Sciatic nerve (tissue), 2 donors: ENCODE measurements at regions of chr7 and their contacts with region 1.

Region 1: DNA sequence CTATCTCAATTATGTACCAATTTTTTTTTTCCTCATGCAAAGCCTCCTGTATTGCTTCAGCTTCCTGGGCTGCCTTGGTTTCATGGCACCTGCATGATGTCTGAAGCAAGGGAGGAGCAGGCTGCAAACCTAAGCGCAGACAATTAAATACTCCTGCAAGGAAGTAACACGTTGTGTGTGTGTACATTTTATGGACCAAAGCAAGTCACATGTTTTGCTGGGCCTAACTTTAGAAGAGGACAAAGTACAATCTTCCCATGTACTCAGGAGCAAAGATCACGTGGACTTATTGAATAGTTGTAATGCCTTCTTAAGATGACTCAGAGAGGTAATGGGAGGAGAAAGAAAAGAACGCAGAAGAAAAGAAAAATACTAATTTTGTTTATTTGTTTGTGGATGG is 944.0 kb upstream of the C7orf33 start:
- DNase-seq: no peak
- ATAC-seq: no peak

Region 2: GRCh38 chr7:147607151-147607800 is 39.3 kb before region 1 on chr7:
- intact Hi-C with region 1: no loop called
- DNase-seq: no peak
- ATAC-seq: no peak

Region 3: GRCh38 chr7:147681530-147681929 is 35.0 kb after region 1 on chr7:
- intact Hi-C with region 1: loop called (anchors 2 kb)
- DNase-seq: no peak
- ATAC-seq: no peak